CD8-positive, alpha-beta memory T cell (primary cell): ENCODE measurements at regions of chr2 and their contacts with region 1.

Region 1: DNA sequence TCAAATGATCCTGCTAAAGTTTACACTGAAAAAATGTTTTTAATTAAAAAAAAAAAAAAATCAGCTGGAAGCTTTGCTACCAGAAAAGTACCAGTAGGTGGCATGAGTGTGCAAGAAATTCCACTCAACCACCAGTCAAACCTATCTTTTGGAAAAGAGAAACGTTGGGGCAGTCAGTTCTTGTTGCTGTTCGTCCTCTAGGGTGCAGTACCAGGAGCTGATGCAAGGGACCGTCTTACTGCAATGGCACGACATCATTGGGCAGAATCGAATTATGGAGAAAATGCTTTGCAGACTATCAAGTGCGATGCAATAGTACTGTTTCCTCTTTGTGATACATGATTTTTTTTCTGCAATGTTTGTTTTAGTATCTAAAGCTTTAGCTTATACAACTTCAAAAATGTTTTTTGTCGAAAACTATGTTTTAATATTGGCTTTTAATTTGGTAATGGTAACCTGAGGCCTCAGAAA is 18.3 kb downstream of the YPEL5 start:
- DNase-seq: peak in 4 of 5 donors; percentile 43 to 81 (median 80)
- H3K4me3 ChIP-seq: no peak overlapping the region
- H3K4me3 Mint-ChIP-seq: peak overlapping the region in 1 of 7 donors; percentile 35
- H3K27ac ChIP-seq: no peak overlapping the region
- H3K27ac Mint-ChIP-seq: peak overlapping the region in 1 of 8 donors; percentile 97
- H3K4me1 ChIP-seq: no peaks in the 10 kb centered on the region
- H3K4me1 Mint-ChIP-seq: peaks cover 5 to 14% (median 10%) of the 10 kb centered on the region in 3 donors
- H3K27me3 ChIP-seq: no peaks in the 10 kb centered on the region
- H3K27me3 Mint-ChIP-seq: peaks cover 0 to 8% of the 10 kb centered on the region in 2 donors

Region 2: DNA sequence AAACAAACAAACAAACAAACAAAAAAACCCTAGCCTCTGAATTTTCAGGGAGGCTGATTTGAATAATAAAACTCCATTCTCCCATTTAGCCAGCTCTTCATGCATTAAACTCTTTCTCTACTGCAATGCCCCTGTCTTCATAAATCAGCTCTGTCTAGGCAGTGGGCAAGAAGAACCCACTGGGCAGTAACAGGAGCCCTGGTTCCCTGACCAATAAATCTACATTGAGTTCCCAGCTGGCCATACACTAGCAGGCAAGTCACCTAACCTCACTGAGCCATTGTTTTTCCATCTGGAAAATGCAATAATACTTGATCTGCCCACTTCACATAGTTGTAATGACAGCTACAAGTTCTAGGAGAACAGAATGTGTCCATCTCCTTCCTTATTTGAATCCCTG is 75.9 kb before region 1 on chr2:
- CTCF ChIA-PET with region 1: interaction called, 16 read pairs
- POLR2A ChIA-PET with region 1: no interaction called
- DNase-seq: no peak
- H3K4me3 ChIP-seq: no peak overlapping the region
- H3K4me3 Mint-ChIP-seq: no peak overlapping the region
- H3K27ac ChIP-seq: no peak overlapping the region
- H3K27ac Mint-ChIP-seq: no peak overlapping the region
- H3K4me1 ChIP-seq: no peaks in the 10 kb centered on the region
- H3K4me1 Mint-ChIP-seq: peaks cover 0 to 3% (median 0%) of the 10 kb centered on the region in 3 donors
- H3K27me3 ChIP-seq: peaks cover 3% of the 10 kb centered on the region
- H3K27me3 Mint-ChIP-seq: peaks cover 23 to 50% of the 10 kb centered on the region in 2 donors

Region 3: GRCh38 chr2:30146438-30147147 is 18.5 kb before region 1 on chr2 and contains the start of gene YPEL5:
- CTCF ChIA-PET with region 1: interaction called, 67 read pairs
- POLR2A ChIA-PET with region 1: interaction called, 10 read pairs
- DNase-seq: peak; percentile 99 to 100 (median 99)
- H3K4me3 ChIP-seq: peak within 1 kb of the TSS; percentile 71
- H3K4me3 Mint-ChIP-seq: peak within 1 kb of the TSS; percentile 86 to 94 (median 90)
- H3K27ac ChIP-seq: peak within 1 kb of the TSS; percentile 100
- H3K27ac Mint-ChIP-seq: peak within 1 kb of the TSS; percentile 98 to 100 (median 99)
- H3K4me1 ChIP-seq: peaks cover 51% of the 10 kb centered on the region
- H3K4me1 Mint-ChIP-seq: peaks cover 45 to 57% (median 50%) of the 10 kb centered on the region in 3 donors
- H3K27me3 ChIP-seq: no peaks in the 10 kb centered on the region
- H3K27me3 Mint-ChIP-seq: peaks cover 0 to 7% of the 10 kb centered on the region in 2 donors
- total RNA-seq, gene YPEL5: 35.7 to 38.3 TPM

Region 4: DNA sequence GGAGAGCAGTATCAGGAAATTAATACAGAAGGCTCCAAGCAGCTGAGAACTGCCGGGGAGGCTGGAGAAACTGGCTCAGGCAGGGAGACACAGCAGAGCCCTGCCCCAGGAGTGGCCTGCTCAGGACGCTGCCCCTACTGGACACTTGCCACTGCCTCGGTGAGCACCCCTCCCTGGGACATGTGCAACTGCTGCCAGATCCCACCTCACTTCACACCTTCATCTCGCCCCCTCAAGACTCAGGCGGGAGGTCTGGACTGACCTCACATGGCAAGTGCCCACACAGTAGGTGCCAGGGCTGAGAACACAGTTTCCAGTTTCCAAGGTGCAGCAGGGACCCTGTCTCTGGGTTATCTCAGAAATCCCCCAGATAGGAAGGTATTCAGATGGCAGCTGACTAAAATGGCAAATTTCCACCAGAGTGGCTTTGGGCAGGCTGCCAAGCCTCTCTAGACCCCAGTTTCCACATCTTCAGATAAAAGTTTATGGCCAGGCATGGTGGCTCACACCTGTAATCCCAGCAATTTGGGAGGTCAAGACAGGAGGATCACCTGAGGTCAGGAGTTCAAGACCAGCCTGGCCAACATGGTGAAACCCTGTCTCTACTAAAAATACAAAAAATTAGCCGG is 32.6 kb after region 1 on chr2:
- CTCF ChIA-PET with region 1: no interaction called
- POLR2A ChIA-PET with region 1: no interaction called
- DNase-seq: no peak
- H3K4me3 ChIP-seq: no peak overlapping the region
- H3K4me3 Mint-ChIP-seq: no peak overlapping the region
- H3K27ac ChIP-seq: no peak overlapping the region
- H3K27ac Mint-ChIP-seq: no peak overlapping the region
- H3K4me1 ChIP-seq: no peaks in the 10 kb centered on the region
- H3K4me1 Mint-ChIP-seq: peaks cover 0 to 4% (median 0%) of the 10 kb centered on the region in 3 donors
- H3K27me3 ChIP-seq: no peaks in the 10 kb centered on the region
- H3K27me3 Mint-ChIP-seq: no peaks in the 10 kb centered on the region

Region 5: GRCh38 chr2:30208452-30208851 is 43.4 kb after region 1 on chr2:
- CTCF ChIA-PET with region 1: interaction called, 37 read pairs
- POLR2A ChIA-PET with region 1: interaction called, 3 read pairs
- DNase-seq: peak in 3 of 5 donors; percentile 19 to 42 (median 38)
- H3K4me3 ChIP-seq: peak overlapping the region; percentile 13
- H3K4me3 Mint-ChIP-seq: peak overlapping the region in 5 of 7 donors; percentile 24 to 74 (median 59)
- H3K27ac ChIP-seq: no peak overlapping the region
- H3K27ac Mint-ChIP-seq: peak overlapping the region; percentile 20 to 93 (median 62)
- H3K4me1 ChIP-seq: peaks cover 26% of the 10 kb centered on the region
- H3K4me1 Mint-ChIP-seq: peaks cover 18 to 22% (median 19%) of the 10 kb centered on the region in 3 donors
- H3K27me3 ChIP-seq: no peaks in the 10 kb centered on the region
- H3K27me3 Mint-ChIP-seq: no peaks in the 10 kb centered on the region

Region 6: GRCh38 chr2:30239308-30239985 is 74.4 kb after region 1 on chr2:
- CTCF ChIA-PET with region 1: interaction called, 28 read pairs
- POLR2A ChIA-PET with region 1: no interaction called
- DNase-seq: peak; percentile 50 to 84 (median 71)
- H3K4me3 ChIP-seq: peak overlapping the region; percentile 33
- H3K4me3 Mint-ChIP-seq: peak overlapping the region; percentile 66 to 94 (median 91)
- H3K27ac ChIP-seq: no peak overlapping the region
- H3K27ac Mint-ChIP-seq: peak overlapping the region; percentile 55 to 97 (median 90)
- H3K4me1 ChIP-seq: peaks cover 89% of the 10 kb centered on the region
- H3K4me1 Mint-ChIP-seq: peaks cover 89 to 96% (median 96%) of the 10 kb centered on the region in 3 donors
- H3K27me3 ChIP-seq: no peaks in the 10 kb centered on the region
- H3K27me3 Mint-ChIP-seq: no peaks in the 10 kb centered on the region

Region 7: DNA sequence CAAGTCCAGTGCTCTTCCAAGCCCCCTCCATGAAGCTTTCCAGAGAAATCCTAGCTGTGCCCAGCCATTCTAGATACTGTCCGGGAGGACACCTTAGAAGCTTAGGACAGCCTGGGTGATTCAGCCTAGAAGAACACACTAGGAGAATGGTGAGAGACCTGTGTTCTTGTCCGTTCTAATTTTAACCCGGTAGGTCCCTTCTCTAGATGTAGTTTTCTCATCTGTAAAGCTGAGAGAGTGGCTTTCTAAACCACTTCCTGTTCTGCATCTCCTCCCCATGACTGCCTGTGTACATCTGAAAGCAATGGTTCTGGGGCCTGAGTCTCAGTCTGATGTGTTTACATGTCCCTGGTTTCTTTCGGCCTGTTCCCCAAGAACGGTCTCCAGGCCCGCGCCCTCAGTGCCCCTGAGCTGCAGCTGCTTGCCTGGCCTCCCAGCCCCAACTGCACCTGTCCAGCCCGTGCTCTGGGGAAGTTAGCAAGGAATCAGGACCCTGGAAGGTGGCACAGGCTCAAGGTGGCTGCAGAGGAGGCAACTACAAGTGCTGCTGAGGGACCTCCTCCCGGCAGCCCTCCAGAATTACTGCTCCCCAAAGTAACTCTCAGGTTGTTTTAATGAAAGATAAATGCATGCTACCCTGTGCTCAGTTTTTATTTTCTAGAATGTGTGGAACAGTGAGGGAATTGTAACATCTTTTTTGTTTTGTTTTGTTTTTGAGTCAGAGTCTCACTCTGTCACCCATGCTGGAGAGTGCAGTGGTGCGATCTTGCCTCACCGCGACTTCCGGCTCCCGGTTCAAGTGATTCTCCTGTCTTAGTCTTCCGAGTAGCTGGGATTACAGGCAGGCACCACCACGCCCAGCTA is 172.1 kb after region 1 on chr2:
- CTCF ChIA-PET with region 1: interaction called, 13 read pairs
- POLR2A ChIA-PET with region 1: interaction called, 4 read pairs
- DNase-seq: peak in 4 of 5 donors; percentile 24 to 70 (median 58)
- H3K4me3 ChIP-seq: peak overlapping the region; percentile 40
- H3K4me3 Mint-ChIP-seq: peak overlapping the region; percentile 44 to 91 (median 85)
- H3K27ac ChIP-seq: peak overlapping the region; percentile 55
- H3K27ac Mint-ChIP-seq: peak overlapping the region; percentile 92 to 100 (median 97)
- H3K4me1 ChIP-seq: peaks cover 67% of the 10 kb centered on the region
- H3K4me1 Mint-ChIP-seq: peaks cover 66 to 75% (median 70%) of the 10 kb centered on the region in 3 donors
- H3K27me3 ChIP-seq: no peaks in the 10 kb centered on the region
- H3K27me3 Mint-ChIP-seq: no peaks in the 10 kb centered on the region

Region 8: GRCh38 chr2:30475542-30475941 is 310.5 kb after region 1 on chr2:
- CTCF ChIA-PET with region 1: interaction called, 13 read pairs
- POLR2A ChIA-PET with region 1: no interaction called
- DNase-seq: no peak
- H3K4me3 ChIP-seq: no peak overlapping the region
- H3K4me3 Mint-ChIP-seq: no peak overlapping the region
- H3K27ac ChIP-seq: no peak overlapping the region
- H3K27ac Mint-ChIP-seq: peak overlapping the region in 1 of 8 donors; percentile 5
- H3K4me1 ChIP-seq: no peaks in the 10 kb centered on the region
- H3K4me1 Mint-ChIP-seq: peaks cover 13 to 17% (median 16%) of the 10 kb centered on the region in 3 donors
- H3K27me3 ChIP-seq: no peaks in the 10 kb centered on the region
- H3K27me3 Mint-ChIP-seq: no peaks in the 10 kb centered on the region

Region 9: DNA sequence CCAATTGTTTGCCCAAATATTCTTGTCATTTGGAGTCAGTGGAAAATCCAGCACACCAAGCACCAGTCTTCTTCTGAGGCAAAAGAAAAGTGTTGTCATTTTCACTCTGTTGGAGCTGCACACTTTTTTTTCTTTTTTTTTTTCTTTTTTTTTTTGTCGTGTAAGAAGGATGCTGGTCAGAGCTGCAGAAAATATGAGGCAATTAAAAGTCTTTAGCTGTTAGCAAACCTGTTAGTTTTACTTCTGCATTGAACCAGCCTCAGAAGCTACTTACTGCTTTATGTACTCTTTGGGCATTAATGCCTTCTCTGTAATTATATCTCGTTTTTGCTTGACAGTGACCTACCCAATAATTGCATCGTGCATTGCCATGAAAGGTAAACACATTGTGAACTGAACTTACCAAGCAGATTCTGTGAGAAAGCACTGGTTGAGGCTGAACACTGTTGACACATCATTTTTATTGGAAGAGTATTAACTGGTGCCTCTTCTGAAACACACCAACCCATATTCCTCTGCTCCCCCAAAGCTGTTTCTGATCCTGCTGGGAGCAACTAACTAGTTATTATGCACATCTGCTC is 476.8 kb after region 1 on chr2:
- CTCF ChIA-PET with region 1: no interaction called
- POLR2A ChIA-PET with region 1: no interaction called
- DNase-seq: no peak
- H3K4me3 ChIP-seq: no peak overlapping the region
- H3K4me3 Mint-ChIP-seq: no peak overlapping the region
- H3K27ac ChIP-seq: no peak overlapping the region
- H3K27ac Mint-ChIP-seq: peak overlapping the region in 1 of 8 donors; percentile 39
- H3K4me1 ChIP-seq: no peaks in the 10 kb centered on the region
- H3K4me1 Mint-ChIP-seq: no peaks in the 10 kb centered on the region
- H3K27me3 ChIP-seq: no peaks in the 10 kb centered on the region
- H3K27me3 Mint-ChIP-seq: no peaks in the 10 kb centered on the region